MCF 10A (cell line): ENCODE measurements at regions of chr14 and their contacts with region 1.

Region 1: GRCh38 chr14:35365130-35366055 is 39.2 kb downstream of the NFKBIA start:
- DNase-seq: peak; percentile 82
- H3K4me3 Mint-ChIP-seq: no peak overlapping the region
- H3K27ac Mint-ChIP-seq: peak overlapping the region; percentile 81
- H3K4me1 Mint-ChIP-seq: peaks cover 5% of the 10 kb centered on the region
- H3K27me3 Mint-ChIP-seq: no peaks in the 10 kb centered on the region
- CTCF ChIP-seq: no peak

Region 2: DNA sequence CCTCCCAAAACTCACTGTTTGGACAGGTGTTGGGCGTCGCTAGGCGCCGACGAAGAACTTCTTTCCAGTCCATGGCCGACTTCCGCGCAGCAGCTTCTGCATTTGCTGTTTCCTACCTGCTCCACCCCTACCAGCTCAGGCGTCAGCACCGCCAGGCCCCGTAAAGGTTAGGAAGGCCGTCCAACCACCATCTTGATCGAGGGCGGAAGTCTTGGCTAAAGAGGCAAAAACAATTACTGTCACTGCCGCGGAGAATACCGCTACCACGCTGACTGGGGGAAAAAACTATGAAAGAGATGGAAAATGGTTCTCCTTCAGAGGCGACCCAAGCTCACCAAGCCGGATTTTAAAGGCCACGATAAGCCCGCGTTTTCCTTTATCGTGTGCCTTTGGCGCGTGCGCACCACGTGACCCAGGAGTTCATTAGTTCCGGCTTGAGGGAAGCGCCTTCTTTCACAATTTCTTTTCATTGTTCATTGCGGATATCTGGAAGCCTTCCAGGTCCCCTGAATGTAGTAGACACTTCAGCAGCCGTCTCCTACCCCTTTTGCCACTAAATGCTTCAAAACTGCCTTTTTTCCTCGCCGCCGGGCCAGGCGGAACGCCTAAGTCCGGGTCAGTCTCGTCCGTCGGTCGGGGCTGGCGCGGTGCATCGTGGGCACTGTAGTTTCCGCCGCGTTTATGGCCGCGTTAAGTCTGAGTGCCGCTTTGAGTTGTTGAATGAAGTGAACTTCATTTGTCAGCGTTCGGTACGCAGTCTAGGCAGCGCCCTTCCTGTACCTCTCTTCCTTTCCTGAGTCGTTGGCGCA is 243.3 kb before region 1 on chr14 and contains the starts of genes PPP2R3C and PRORP:
- CTCF ChIA-PET with region 1: no interaction called
- POLR2A ChIA-PET with region 1: interaction called, 13 read pairs
- intact Hi-C with region 1: no loop called
- DNase-seq: peak; percentile 99
- H3K4me3 Mint-ChIP-seq: peak within 1 kb of the TSS; percentile 98
- H3K27ac Mint-ChIP-seq: peak within 1 kb of the TSS; percentile 100
- H3K4me1 Mint-ChIP-seq: peaks cover 31% of the 10 kb centered on the region
- H3K27me3 Mint-ChIP-seq: no peaks in the 10 kb centered on the region
- CTCF ChIP-seq: no peak
- total RNA-seq, gene PPP2R3C: 16.9 and 21.6 TPM in 2 replicates
- total RNA-seq, gene PRORP: 27.9 and 30.5 TPM in 2 replicates

Region 3: GRCh38 chr14:35331605-35332516 is 33.5 kb before region 1 on chr14:
- CTCF ChIA-PET with region 1: interaction called, 9 read pairs
- POLR2A ChIA-PET with region 1: interaction called, 42 read pairs
- intact Hi-C with region 1: no loop called
- DNase-seq: no peak
- H3K4me3 Mint-ChIP-seq: peak overlapping the region; percentile 6
- H3K27ac Mint-ChIP-seq: peak overlapping the region; percentile 66
- H3K4me1 Mint-ChIP-seq: peaks cover 24% of the 10 kb centered on the region
- H3K27me3 Mint-ChIP-seq: no peaks in the 10 kb centered on the region
- CTCF ChIP-seq: no peak